ENCODE measurements at regions of chr15 and their contacts with region 1.

Region 1: GRCh38 chr15:74835307-74835823 is 7.6 kb downstream of the ULK3 start:
- DNase-seq: peak in 3 of 5 donors; percentile 16 to 38 (median 24)
- H3K4me3 ChIP-seq: no peak overlapping the region
- H3K4me3 Mint-ChIP-seq: no peak overlapping the region
- H3K27ac ChIP-seq: no peak overlapping the region
- H3K27ac Mint-ChIP-seq: peak overlapping the region in 1 of 7 donors; percentile 5
- H3K4me1 ChIP-seq: no peaks in the 10 kb centered on the region
- H3K4me1 Mint-ChIP-seq: peaks cover 0 to 5% (median 3%) of the 10 kb centered on the region in 4 donors
- H3K27me3 ChIP-seq: no peaks in the 10 kb centered on the region
- H3K27me3 Mint-ChIP-seq: no peaks in the 10 kb centered on the region

Region 2: DNA sequence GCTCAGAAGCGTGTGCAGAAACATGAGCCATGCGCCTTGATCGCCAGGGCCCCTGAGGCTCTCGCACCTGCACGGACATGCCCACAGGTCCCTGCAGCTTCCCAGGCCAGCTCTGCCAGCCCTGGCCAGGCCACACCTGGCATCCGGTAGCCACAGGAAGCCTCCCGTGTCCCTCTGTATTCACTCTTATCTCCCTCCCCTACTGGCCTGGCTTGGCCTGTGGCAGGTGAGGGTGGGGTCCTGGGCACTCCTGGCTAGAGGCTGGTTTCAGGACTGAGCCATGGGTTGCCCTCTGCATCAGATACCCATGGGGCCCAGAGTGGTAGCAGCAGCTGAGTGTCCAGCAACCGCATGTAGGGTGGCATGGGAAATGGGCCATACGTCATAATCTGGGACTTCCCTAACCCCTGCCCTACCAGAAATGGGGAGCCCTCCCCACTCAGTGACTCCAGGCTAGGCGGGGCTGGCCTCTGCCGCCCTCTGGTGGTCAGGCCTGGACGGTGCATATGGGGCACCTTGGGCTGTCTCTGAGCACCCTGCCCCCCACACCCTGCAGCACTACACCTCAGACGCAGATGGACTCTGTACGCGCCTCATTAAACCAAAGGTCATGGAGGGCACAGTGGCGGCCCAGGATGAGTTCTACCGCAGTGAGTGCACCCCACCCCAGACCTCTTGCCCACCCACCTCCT is 35.4 kb before region 1 on chr15:
- CTCF ChIA-PET with region 1: interaction called, 3 read pairs
- POLR2A ChIA-PET with region 1: interaction called, 4 read pairs
- intact Hi-C with region 1: loop called (anchors 5 kb)
- DNase-seq: peak; percentile 84 to 89 (median 86)
- H3K4me3 ChIP-seq: no peak overlapping the region
- H3K4me3 Mint-ChIP-seq: peak overlapping the region in 4 of 8 donors; percentile 17 to 65 (median 46)
- H3K27ac ChIP-seq: peak overlapping the region; percentile 84
- H3K27ac Mint-ChIP-seq: peak overlapping the region; percentile 83 to 97 (median 94)
- H3K4me1 ChIP-seq: peaks cover 55% of the 10 kb centered on the region
- H3K4me1 Mint-ChIP-seq: peaks cover 28 to 59% (median 45%) of the 10 kb centered on the region in 4 donors
- H3K27me3 ChIP-seq: no peaks in the 10 kb centered on the region
- H3K27me3 Mint-ChIP-seq: no peaks in the 10 kb centered on the region

Region 3: GRCh38 chr15:74978503-74978902 is 143.1 kb after region 1 on chr15:
- CTCF ChIA-PET with region 1: no interaction called
- POLR2A ChIA-PET with region 1: no interaction called
- intact Hi-C with region 1: no loop called
- DNase-seq: no peak
- H3K4me3 ChIP-seq: no peak overlapping the region
- H3K4me3 Mint-ChIP-seq: no peak overlapping the region
- H3K27ac ChIP-seq: no peak overlapping the region
- H3K27ac Mint-ChIP-seq: peak overlapping the region in 1 of 7 donors; percentile 31
- H3K4me1 ChIP-seq: no peaks in the 10 kb centered on the region
- H3K4me1 Mint-ChIP-seq: no peaks in the 10 kb centered on the region
- H3K27me3 ChIP-seq: no peaks in the 10 kb centered on the region
- H3K27me3 Mint-ChIP-seq: peaks cover 6 to 7% of the 10 kb centered on the region in 2 donors

Region 4: DNA sequence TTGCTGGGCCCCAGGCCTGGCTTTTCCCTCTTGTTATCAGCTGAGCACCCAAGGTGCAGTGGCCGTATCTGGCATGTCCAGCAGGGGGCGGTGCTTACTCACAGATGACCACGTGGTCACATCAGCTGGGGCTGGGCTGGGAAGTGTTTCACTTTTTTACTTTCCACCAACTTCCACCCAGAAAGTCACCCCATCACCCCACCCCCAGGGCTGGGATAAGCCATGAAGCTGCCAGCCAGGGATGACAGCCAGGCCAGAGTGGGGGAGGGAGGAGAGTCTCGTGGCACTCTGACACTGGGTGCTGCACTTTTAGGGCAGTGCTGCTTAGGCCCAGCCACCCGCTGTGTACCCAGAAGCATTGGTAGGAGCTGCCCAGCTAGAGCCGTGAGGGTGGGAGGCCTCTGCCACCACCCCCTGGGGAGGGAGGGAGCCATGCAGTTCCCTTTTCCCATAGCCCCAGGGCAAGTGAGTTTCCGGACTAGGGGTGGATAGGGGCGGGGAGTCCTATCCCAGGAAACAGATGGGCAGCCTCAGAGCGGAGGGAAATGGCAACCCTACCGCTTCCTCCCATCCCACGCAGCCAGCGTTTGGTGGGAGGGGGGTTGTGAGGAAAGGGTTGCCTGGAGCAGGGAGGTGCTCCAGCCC is 194.1 kb after region 1 on chr15:
- CTCF ChIA-PET with region 1: no interaction called
- POLR2A ChIA-PET with region 1: no interaction called
- intact Hi-C with region 1: no loop called
- DNase-seq: peak; percentile 75 to 84 (median 79)
- H3K4me3 ChIP-seq: no peak overlapping the region
- H3K4me3 Mint-ChIP-seq: peak overlapping the region in 1 of 8 donors; percentile 49
- H3K27ac ChIP-seq: no peak overlapping the region
- H3K27ac Mint-ChIP-seq: peak overlapping the region in 3 of 7 donors; percentile 37 to 71 (median 64)
- H3K4me1 ChIP-seq: peaks cover 16% of the 10 kb centered on the region
- H3K4me1 Mint-ChIP-seq: peaks cover 9 to 19% (median 13%) of the 10 kb centered on the region in 4 donors
- H3K27me3 ChIP-seq: no peaks in the 10 kb centered on the region
- H3K27me3 Mint-ChIP-seq: no peaks in the 10 kb centered on the region

Measured in CD4-positive, alpha-beta memory T cell (primary cell).